PC-3 (cell line): ENCODE measurements at regions of chrX and their contacts with region 1.

Region 1: GRCh38 chrX:115592997-115593734 is 32.2 kb downstream of the PLS3 start:
- DNase-seq: peak; percentile 63
- ATAC-seq: peak; percentile 7; the same call in 1 of the 2 replicates
- H3K4me3 ChIP-seq: peak overlapping the region; percentile 57
- H3K27ac ChIP-seq: peak overlapping the region; percentile 98
- H3K4me1 ChIP-seq: peaks cover 67% of the 10 kb centered on the region
- H3K27me3 ChIP-seq: no peaks in the 10 kb centered on the region
- CTCF ChIP-seq: no peak

Region 2: GRCh38 chrX:115632455-115632854 is 39.3 kb after region 1 on chrX:
- CTCF ChIA-PET with region 1: no interaction called
- POLR2A ChIA-PET with region 1: interaction called, 5 read pairs
- intact Hi-C with region 1: loop called (anchors 2 kb)
- DNase-seq: peak; percentile 89
- ATAC-seq: peak; percentile 93
- H3K4me3 ChIP-seq: no peak overlapping the region
- H3K27ac ChIP-seq: peak overlapping the region; percentile 98
- H3K4me1 ChIP-seq: peaks cover 33% of the 10 kb centered on the region
- H3K27me3 ChIP-seq: no peaks in the 10 kb centered on the region
- CTCF ChIP-seq: no peak

Region 3: DNA sequence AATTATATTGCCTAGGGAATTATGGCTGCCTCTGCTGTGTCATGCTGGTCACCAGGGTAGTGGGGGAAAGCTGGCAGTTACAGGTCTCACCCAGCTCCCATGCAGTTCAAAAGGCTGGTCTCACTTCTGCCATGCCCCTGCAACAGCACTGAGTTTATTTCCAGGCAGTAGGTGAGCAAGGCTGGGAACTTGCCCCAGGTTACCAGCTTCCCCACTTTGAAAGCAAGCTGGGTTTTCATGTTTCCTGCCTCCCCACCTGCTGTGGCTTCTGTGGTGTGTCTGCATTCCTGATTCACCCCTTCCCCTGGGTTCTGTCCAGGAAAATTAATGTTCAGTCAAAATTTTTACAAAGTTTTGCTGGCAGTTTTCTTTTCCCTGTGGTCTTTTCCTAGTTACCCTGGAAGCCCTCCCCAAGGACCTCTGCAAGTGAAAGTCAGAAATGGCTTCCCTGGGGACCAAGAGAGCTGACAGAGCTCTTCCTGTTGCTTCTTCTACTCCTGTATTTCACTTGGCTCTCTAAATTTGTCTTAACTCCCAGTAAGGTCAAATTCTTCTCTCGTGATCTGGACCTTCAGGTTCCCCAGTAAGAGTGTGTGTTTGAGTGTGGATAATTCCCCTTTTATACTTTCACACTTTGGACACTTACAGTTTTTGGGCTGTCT is 518.9 kb after region 1 on chrX:
- CTCF ChIA-PET with region 1: no interaction called
- POLR2A ChIA-PET with region 1: no interaction called
- intact Hi-C with region 1: no loop called
- DNase-seq: no peak
- ATAC-seq: no peak
- H3K4me3 ChIP-seq: no peak overlapping the region
- H3K27ac ChIP-seq: no peak overlapping the region
- H3K4me1 ChIP-seq: no peaks in the 10 kb centered on the region
- H3K27me3 ChIP-seq: peaks cover 10% of the 10 kb centered on the region; the same call in 1 of the 2 replicates
- CTCF ChIP-seq: no peak